ENCODE measurements at regions of chr16 and their contacts with region 1.

Region 1: GRCh38 chr16:66894948-66895688 is 14.8 kb downstream of the PDP2 start:
- DNase-seq: peak in 4 of 5 donors; percentile 70 to 76 (median 72)
- ATAC-seq: peak; percentile 58 to 77 (median 73)
- H3K4me3 ChIP-seq: no peak overlapping the region
- H3K27ac ChIP-seq: peak overlapping the region in 5 of 12 donors; percentile 27 to 67 (median 52)
- H3K4me1 ChIP-seq: peaks cover 0 to 27% (median 17%) of the 10 kb centered on the region in 12 donors
- H3K27me3 ChIP-seq: no peaks in the 10 kb centered on the region
- CTCF ChIP-seq: peak; percentile 73 to 87 (median 81)
- POLR2A ChIP-seq: no peak

Region 2: DNA sequence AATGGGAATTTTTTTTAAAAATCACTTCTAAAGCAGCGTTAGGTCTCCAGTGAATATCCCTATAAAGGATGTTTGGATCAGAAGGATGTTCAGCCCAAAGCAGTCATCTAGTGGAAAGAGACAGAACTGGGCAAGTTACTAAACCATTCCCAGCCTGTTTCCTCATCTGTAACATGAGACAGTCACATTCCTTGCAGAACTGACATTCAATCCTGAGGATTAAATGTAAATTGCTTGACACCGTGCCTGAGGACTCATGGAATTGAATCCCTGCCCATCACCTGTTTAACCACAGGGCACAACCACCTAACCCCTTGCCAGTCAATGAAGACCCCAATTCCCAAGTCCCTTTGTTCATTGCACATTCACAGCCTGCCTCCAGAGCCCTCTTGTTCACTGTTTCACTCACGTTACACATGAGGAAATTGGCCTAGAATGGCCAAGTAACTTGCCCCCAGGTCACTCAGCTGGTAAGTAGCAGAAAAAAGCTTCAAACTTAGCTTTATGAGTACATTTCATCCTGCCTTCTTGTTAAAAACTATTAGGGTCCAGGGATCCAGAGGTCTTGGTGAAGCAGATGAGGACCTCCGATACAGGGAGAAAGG is 314.4 kb before region 1 on chr16:
- intact Hi-C with region 1: no loop called
- DNase-seq: no peak
- ATAC-seq: no peak
- H3K4me3 ChIP-seq: no peak overlapping the region
- H3K27ac ChIP-seq: peak overlapping the region in 2 of 12 donors; percentile 27 to 40
- H3K4me1 ChIP-seq: peaks cover 0 to 47% (median 17%) of the 10 kb centered on the region in 12 donors
- H3K27me3 ChIP-seq: peaks cover 0 to 26% (median 12%) of the 10 kb centered on the region in 9 donors
- CTCF ChIP-seq: no peak
- POLR2A ChIP-seq: no peak

Region 3: DNA sequence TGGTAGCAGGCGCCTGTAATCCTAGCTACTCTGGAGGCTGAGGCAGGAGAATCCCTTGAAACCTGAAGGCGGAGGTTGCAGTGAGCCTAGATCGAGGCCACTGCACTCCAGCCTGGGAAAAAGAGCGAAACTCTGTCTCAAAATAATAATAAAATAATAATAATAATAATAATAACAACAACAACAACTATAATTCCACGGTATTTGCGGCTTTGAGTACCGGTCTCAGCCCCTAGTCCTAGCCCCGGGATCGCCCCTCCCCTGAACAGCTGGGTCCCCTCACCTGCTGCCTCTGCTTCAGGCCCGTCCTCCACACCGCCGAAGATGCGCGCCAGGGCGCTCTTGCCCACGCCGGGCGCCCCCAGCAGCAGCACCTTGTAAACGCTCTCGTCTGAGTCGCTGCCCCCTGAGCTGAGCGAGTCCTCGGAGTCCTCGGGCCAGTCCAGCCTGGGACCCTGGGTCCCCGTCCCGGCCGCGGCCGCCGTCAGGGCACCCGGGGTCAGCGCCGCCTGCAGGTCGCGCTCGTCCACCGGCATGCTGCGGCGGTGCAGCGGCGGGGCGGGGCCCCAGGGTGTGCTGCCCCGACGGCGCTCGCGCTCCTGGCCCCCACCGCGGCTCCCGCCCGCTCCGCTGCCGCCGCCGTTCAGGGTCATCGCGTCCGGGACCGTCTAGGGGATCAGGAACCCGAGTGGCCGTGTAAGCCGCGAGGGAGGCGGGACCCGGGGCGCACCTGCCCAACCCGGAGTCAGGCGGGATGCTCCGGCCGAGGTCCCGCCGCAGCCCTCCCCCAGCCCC is 29.6 kb after region 1 on chr16:
- intact Hi-C with region 1: loop called in 2 of 10 experiments (anchors 1 to 2 kb)
- DNase-seq: peak in 4 of 5 donors; percentile 57 to 75 (median 70)
- ATAC-seq: peak in 2 of 4 donors; percentile 1 to 25
- H3K4me3 ChIP-seq: peak overlapping the region; percentile 48 to 94 (median 68)
- H3K27ac ChIP-seq: peak overlapping the region; percentile 80 to 99 (median 93)
- H3K4me1 ChIP-seq: peaks cover 0 to 70% (median 32%) of the 10 kb centered on the region in 12 donors
- H3K27me3 ChIP-seq: peaks cover 0 to 39% (median 0%) of the 10 kb centered on the region in 9 donors
- CTCF ChIP-seq: peak in 9 of 12 donors; percentile 14 to 52 (median 39)
- POLR2A ChIP-seq: no peak

Region 4: DNA sequence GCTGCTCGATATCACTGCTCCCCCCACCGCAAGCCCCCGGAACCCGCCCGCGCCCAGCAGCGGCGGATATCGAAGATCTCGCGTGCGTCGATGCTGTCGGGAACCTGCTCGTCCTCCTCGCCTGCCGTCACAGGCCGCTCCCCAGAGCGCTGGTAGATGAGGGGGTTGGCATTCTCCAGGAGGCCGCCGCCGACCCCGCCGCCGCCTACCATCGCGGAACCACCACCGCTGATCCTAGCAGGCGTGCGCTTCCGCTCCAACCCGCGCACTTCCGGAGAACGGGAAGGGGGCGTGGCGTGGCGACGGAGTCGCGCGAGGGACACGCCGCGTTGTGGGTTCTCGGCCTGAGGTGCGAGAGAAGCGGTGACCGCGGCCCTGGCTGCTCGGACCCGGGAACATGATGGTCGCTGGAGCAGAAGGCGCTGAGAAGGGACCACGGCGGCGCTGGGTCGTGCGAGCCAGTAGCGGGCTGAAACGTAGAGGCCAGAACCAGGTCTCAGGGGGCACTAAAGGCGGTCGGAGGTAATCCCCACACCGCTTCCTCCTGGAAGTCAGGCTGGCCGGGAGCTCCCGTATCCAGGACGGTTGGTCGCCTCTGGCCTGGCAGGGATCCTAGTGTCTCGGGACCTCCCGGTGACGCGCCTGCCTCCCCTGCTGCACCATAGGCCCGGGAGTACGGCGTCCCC is 39.2 kb after region 1 on chr16 and contains the start of gene CIAO2B:
- intact Hi-C with region 1: loop called in 3 of 10 experiments (anchors 1 to 5 kb)
- DNase-seq: peak; percentile 91 to 95 (median 93)
- ATAC-seq: peak; percentile 66 to 91 (median 81)
- H3K4me3 ChIP-seq: peak within 1 kb of the TSS; percentile 67 to 100 (median 95)
- H3K27ac ChIP-seq: peak within 1 kb of the TSS; percentile 82 to 99 (median 96)
- H3K4me1 ChIP-seq: peaks cover 4 to 58% (median 37%) of the 10 kb centered on the region in 12 donors
- H3K27me3 ChIP-seq: no peaks in the 10 kb centered on the region
- CTCF ChIP-seq: no peak
- POLR2A ChIP-seq: peak; percentile 27 to 79
- total RNA-seq, gene CIAO2B: 103 to 188 (median 110) TPM

Region 5: GRCh38 chr16:66947302-66948065 is 52.4 kb after region 1 on chr16:
- intact Hi-C with region 1: loop called in 2 of 10 experiments (anchors 5 to 10 kb)
- DNase-seq: peak; percentile 69 to 75 (median 73)
- ATAC-seq: peak; percentile 42 to 77 (median 64)
- H3K4me3 ChIP-seq: peak overlapping the region; percentile 18 to 62 (median 52)
- H3K27ac ChIP-seq: no peak overlapping the region
- H3K4me1 ChIP-seq: peaks cover 0 to 22% (median 9%) of the 10 kb centered on the region in 12 donors
- H3K27me3 ChIP-seq: peaks cover 0 to 35% (median 0%) of the 10 kb centered on the region in 9 donors
- CTCF ChIP-seq: peak; percentile 75 to 95 (median 89)
- POLR2A ChIP-seq: no peak

Region 6: GRCh38 chr16:66954097-66954659 is 59.1 kb after region 1 on chr16:
- intact Hi-C with region 1: loop called in 3 of 10 experiments (anchors 2 to 10 kb)
- DNase-seq: peak in 3 of 5 donors; percentile 66 to 73 (median 68)
- ATAC-seq: peak in 3 of 4 donors; percentile 71 to 80 (median 80)
- H3K4me3 ChIP-seq: no peak overlapping the region
- H3K27ac ChIP-seq: no peak overlapping the region
- H3K4me1 ChIP-seq: peaks cover 0 to 6% (median 0%) of the 10 kb centered on the region in 12 donors
- H3K27me3 ChIP-seq: peaks cover 0 to 25% (median 0%) of the 10 kb centered on the region in 9 donors
- CTCF ChIP-seq: peak; percentile 63 to 86 (median 78)
- POLR2A ChIP-seq: no peak

Region 7: GRCh38 chr16:67159593-67160406 is 264.7 kb after region 1 on chr16 and contains the starts of genes FBXL8 and TRADD:
- intact Hi-C with region 1: loop called in 4 of 10 experiments (anchors 10 kb)
- DNase-seq: peak; percentile 75 to 88 (median 82)
- ATAC-seq: peak; percentile 23 to 75 (median 71)
- H3K4me3 ChIP-seq: peak within 1 kb of the TSS; percentile 75 to 98 (median 97)
- H3K27ac ChIP-seq: peak within 1 kb of the TSS; percentile 36 to 94 (median 83)
- H3K4me1 ChIP-seq: peaks cover 0 to 68% (median 58%) of the 10 kb centered on the region in 12 donors
- H3K27me3 ChIP-seq: peaks cover 0 to 32% (median 2%) of the 10 kb centered on the region in 9 donors
- CTCF ChIP-seq: peak in 11 of 12 donors; percentile 7 to 59 (median 38)
- POLR2A ChIP-seq: peak in 1 of 2 donors; percentile 76
- total RNA-seq, gene FBXL8: 5.0 to 13.4 (median 7.2) TPM
- total RNA-seq, gene TRADD: 4.7 to 14.3 (median 8.4) TPM